Activated CD8-positive, alpha-beta T cell treated with anti-CD3 and anti-CD28 coated beads, Interleukin-2, amount 10 ng/mL, durations not matched to agents 7 days and 5 days (primary cell): ENCODE measurements at regions of chr2 and their contacts with region 1.

Region 1: GRCh38 chr2:44244129-44244871 is 31.0 kb upstream of the SLC3A1 start:
- DNase-seq: peak; percentile 72
- ATAC-seq: peak; percentile 81
- H3K4me3 Mint-ChIP-seq: peak overlapping the region; percentile 62
- H3K27ac Mint-ChIP-seq: no peak overlapping the region
- H3K4me1 Mint-ChIP-seq: peaks cover 10% of the 10 kb centered on the region
- H3K27me3 Mint-ChIP-seq: no peaks in the 10 kb centered on the region

Region 2: DNA sequence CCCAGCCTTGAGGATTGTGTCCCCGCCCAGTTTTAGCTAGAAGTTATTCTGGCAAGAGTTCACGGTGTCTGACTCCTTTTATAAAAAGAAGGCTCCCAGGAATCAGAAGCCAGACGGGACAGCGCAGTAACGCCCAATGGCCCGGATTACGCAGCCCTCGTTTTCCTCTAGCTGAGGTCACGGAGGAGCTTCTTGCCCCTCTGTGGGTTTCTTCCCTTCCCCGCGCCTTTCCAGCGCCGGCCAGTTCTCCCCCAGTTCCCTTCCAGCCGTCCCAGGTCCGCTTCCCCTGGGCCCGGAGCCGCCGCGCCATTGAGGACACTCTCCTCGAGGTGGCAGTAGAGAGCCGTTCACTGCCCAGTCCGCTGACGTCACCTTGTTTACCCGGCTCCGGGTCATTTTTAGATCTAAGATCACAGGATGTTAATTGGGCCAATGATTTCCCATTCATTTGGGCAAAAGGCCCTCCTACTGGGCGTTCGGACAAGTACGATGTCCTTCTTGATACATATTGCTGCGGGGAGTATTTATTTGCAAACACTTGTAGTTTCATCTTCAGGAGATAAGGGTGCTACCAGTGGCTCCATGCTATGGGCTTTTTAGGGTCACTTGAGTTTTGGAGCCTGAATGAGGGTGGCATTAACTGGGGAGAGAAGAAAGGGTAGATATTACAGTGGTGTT is 157.1 kb before region 1 on chr2:
- CTCF ChIA-PET with region 1: interaction called, 15 read pairs
- POLR2A ChIA-PET with region 1: no interaction called
- DNase-seq: peak; percentile 88
- ATAC-seq: peak; percentile 90
- H3K4me3 Mint-ChIP-seq: peak overlapping the region; percentile 77
- H3K27ac Mint-ChIP-seq: peak overlapping the region; percentile 84
- H3K4me1 Mint-ChIP-seq: peaks cover 28% of the 10 kb centered on the region
- H3K27me3 Mint-ChIP-seq: no peaks in the 10 kb centered on the region

Region 3: GRCh38 chr2:44201648-44202165 is 42.6 kb before region 1 on chr2:
- CTCF ChIA-PET with region 1: no interaction called
- POLR2A ChIA-PET with region 1: no interaction called
- DNase-seq: no peak
- ATAC-seq: no peak
- H3K4me3 Mint-ChIP-seq: no peak overlapping the region
- H3K27ac Mint-ChIP-seq: no peak overlapping the region
- H3K4me1 Mint-ChIP-seq: peaks cover 8% of the 10 kb centered on the region
- H3K27me3 Mint-ChIP-seq: no peaks in the 10 kb centered on the region

Region 4: DNA sequence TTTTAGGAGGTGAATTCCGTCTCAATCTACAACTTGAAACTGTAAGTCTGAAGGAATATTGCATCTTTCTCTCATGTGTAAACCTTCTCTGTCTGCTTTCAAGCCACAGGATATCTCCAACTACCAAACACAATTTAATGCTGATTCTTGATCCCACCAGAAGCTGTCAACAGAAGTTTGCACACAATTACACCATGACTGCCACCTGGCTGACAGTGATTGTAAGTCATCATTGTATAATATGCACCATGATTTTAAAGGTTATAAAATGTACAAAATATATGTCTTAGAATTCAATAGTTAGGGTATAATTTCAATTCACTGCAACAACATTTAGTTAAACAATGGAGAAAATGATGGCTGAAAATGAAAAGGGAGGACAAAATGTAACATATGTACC is 98.6 kb after region 1 on chr2:
- CTCF ChIA-PET with region 1: interaction called, 18 read pairs
- POLR2A ChIA-PET with region 1: no interaction called
- DNase-seq: peak; percentile 46
- ATAC-seq: no peak
- H3K4me3 Mint-ChIP-seq: no peak overlapping the region
- H3K27ac Mint-ChIP-seq: no peak overlapping the region
- H3K4me1 Mint-ChIP-seq: no peaks in the 10 kb centered on the region
- H3K27me3 Mint-ChIP-seq: no peaks in the 10 kb centered on the region